ENCODE measurements at regions of chr5 and their contacts with region 1.

Region 1: GRCh38 chr5:140639148-140639979 is at the start of gene TMCO6:
- DNase-seq: peak; percentile 94 to 98 (median 97)
- ATAC-seq: peak; percentile 99
- H3K4me3 ChIP-seq: peak within 1 kb of the TSS; percentile 91 to 95
- H3K4me3 Mint-ChIP-seq: peak within 1 kb of the TSS; percentile 92
- H3K27ac ChIP-seq: peak within 1 kb of the TSS; percentile 72 to 93
- H3K27ac Mint-ChIP-seq: peak within 1 kb of the TSS; percentile 93
- H3K4me1 ChIP-seq: peaks cover 9% of the 10 kb centered on the region
- H3K4me1 Mint-ChIP-seq: peaks cover 30% of the 10 kb centered on the region
- H3K27me3 ChIP-seq: no peaks in the 10 kb centered on the region
- H3K27me3 Mint-ChIP-seq: no peaks in the 10 kb centered on the region
- CTCF ChIP-seq: peak; percentile 70
- total RNA-seq, gene TMCO6: 16.7 to 20.6 TPM

Region 2: GRCh38 chr5:140372971-140373487 is 266.3 kb before region 1 on chr5:
- CTCF ChIA-PET with region 1: interaction called, 18 read pairs
- POLR2A ChIA-PET with region 1: no interaction called
- intact Hi-C with region 1: loop called (anchors 5 kb)
- DNase-seq: peak in 7 of 9 experiments; percentile 9 to 64 (median 44)
- ATAC-seq: peak; percentile 81
- H3K4me3 ChIP-seq: no peak overlapping the region
- H3K4me3 Mint-ChIP-seq: no peak overlapping the region
- H3K27ac ChIP-seq: no peak overlapping the region
- H3K27ac Mint-ChIP-seq: no peak overlapping the region
- H3K4me1 ChIP-seq: no peaks in the 10 kb centered on the region
- H3K4me1 Mint-ChIP-seq: peaks cover 2% of the 10 kb centered on the region
- H3K27me3 ChIP-seq: no peaks in the 10 kb centered on the region
- H3K27me3 Mint-ChIP-seq: no peaks in the 10 kb centered on the region
- CTCF ChIP-seq: peak; percentile 75

Region 3: DNA sequence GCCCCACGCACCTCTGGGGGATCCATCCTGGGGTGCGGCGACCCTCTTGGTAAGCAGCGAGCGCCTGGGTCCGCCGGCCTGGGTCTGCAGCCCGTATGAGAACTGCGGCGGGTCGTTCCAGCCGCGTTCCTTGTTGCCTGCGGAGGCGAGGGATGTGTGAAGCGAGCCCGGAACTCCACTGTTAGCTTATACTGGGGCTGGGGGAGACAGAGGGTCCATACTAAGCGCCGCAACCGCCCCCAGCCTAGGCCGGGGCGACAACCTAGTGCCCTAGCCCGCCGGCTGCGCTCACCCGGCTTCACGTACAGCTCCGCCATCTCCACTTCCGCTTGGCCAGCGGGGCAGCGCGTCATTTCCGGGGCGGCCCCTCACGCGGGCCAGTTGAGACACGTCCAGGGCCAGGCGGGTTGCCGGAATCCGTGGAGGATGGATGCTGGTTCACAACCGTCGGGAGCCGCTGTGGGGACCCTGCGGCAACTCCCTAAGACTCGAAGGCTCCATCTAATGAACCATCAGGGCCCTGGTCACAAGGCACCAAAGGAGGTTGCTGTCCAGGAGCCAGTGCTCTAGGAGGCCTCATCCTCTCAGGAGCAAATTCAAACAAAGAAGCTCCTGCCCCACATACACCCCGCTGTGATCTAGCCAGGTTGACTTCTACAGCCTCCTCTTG is 82.1 kb before region 1 on chr5 and contains the start of gene SRA1:
- CTCF ChIA-PET with region 1: interaction called, 3 read pairs
- POLR2A ChIA-PET with region 1: no interaction called
- intact Hi-C with region 1: loop called in 1 of 2 experiments (anchors 2 kb)
- DNase-seq: peak; percentile 53 to 90 (median 80)
- ATAC-seq: peak; percentile 83
- H3K4me3 ChIP-seq: peak within 1 kb of the TSS; percentile 87 to 97
- H3K4me3 Mint-ChIP-seq: peak within 1 kb of the TSS; percentile 91
- H3K27ac ChIP-seq: peak within 1 kb of the TSS; percentile 89 to 97
- H3K27ac Mint-ChIP-seq: peak within 1 kb of the TSS; percentile 96
- H3K4me1 ChIP-seq: peaks cover 28% of the 10 kb centered on the region
- H3K4me1 Mint-ChIP-seq: peaks cover 47% of the 10 kb centered on the region
- H3K27me3 ChIP-seq: no peaks in the 10 kb centered on the region
- H3K27me3 Mint-ChIP-seq: no peaks in the 10 kb centered on the region
- CTCF ChIP-seq: no peak
- total RNA-seq, gene SRA1: 33.7 to 37.2 TPM

Region 4: GRCh38 chr5:140664359-140665119 is 25.2 kb after region 1 on chr5 and contains the start of gene WDR55:
- CTCF ChIA-PET with region 1: interaction called, 3 read pairs
- POLR2A ChIA-PET with region 1: interaction called, 5 read pairs
- intact Hi-C with region 1: loop called in 1 of 2 experiments (anchors 1 kb)
- DNase-seq: peak; percentile 90 to 98 (median 97)
- ATAC-seq: peak; percentile 92
- H3K4me3 ChIP-seq: peak within 1 kb of the TSS; percentile 80 to 95
- H3K4me3 Mint-ChIP-seq: peak within 1 kb of the TSS; percentile 89
- H3K27ac ChIP-seq: peak within 1 kb of the TSS; percentile 90 to 91
- H3K27ac Mint-ChIP-seq: peak within 1 kb of the TSS; percentile 96
- H3K4me1 ChIP-seq: peaks cover 15% of the 10 kb centered on the region
- H3K4me1 Mint-ChIP-seq: peaks cover 38% of the 10 kb centered on the region
- H3K27me3 ChIP-seq: no peaks in the 10 kb centered on the region
- H3K27me3 Mint-ChIP-seq: no peaks in the 10 kb centered on the region
- CTCF ChIP-seq: no peak
- total RNA-seq, gene WDR55: 45.4 to 49.2 TPM

Measured in CD8-positive, alpha-beta T cell (primary cell).